IMR-90 (cell line): ENCODE measurements at regions of chr11 and their contacts with region 1.

Region 1: DNA sequence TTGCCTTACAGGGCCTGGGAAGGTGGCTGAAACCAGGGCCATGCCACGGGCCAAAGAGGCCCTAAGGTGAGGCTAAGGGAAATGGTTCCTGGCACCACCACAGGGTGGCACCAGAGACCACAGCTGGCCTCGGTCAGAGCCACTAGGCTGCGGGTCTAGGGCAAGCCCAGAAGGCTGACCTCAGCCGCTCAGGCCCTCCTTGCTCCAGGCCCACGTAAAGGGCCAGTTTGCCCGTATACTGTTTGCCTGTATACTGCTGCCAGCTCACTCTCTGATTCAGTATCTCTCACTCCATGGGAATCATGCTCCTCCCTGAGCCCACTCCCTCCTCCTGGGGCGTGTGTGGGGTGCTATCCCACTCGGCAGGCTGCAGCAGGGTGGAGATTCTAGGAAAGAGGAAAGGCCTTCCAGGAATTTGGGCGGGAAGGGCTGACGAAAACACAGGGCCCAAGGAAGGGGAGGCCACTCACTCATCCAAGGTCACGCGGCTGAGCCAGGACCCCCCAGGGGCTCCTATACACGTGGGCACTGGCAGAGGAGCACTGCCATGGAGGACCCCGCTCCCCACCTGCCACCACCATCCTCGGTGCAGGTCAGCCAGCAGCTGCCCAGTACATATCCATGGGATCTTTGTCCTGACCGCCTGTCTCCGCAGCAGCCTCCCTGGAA is 62.4 kb downstream of the NECTIN1 start:
- DNase-seq: peak; percentile 47
- ATAC-seq: peak; percentile 95
- H3K4me3 ChIP-seq: no peak overlapping the region
- H3K27ac ChIP-seq: no peak overlapping the region
- H3K4me1 ChIP-seq: peaks cover 4% of the 10 kb centered on the region; the same call in 1 of the 2 replicates
- H3K27me3 ChIP-seq: no peaks in the 10 kb centered on the region
- CTCF ChIP-seq: peak; percentile 94
- POLR2A ChIP-seq: peak; percentile 35; the same call in 1 of the 2 replicates
- RAD21 ChIP-seq: peak; percentile 98

Region 2: DNA sequence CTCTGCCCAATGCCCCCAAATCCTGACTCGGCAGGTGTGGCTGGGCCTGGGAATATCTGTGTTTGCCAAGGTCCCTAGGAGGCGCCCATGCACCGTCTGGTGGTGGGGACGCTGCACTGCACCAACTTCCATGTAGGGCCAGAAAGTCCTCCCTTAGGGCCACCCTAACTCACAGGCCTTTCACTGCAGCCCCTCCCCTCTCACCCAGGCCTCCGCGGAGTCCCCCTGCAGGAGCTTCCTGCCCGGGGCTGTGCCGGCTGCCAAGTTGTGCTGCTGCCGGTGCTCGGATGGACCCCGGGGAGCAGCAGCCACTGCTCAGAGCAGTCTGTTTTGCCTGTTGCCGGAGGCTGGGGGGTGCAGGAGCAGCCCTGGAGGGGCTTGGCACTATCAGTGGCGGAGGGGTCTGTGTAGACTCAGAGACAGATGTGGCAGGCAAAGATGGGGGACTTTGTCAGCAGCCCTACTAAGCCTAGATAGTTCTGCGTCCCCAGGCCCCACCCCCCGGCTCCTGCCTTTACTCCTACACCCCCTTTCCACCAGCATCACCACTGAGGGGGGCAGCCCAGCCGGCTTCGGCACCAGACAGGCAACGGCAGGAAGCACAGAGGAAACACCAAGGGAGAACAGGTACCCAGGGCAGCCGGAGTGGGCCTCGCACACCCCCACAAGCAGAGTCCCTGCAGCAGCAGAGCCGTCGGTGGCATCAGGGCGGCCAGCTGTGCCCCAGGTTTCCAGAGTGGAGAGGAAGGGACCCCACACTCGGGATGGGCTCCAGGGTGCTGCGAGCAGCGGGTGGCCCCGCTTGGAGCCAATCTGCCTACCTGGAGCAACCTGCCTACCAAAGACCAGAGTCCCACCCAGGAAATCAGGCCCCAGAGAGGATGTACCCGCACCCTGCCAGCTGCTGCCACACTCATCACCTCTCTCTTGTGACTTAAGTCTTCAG is 347.0 kb after region 1 on chr11:
- CTCF ChIA-PET with region 1: no interaction called
- POLR2A ChIA-PET with region 1: no interaction called
- dilution Hi-C with region 1: no loop called
- in situ Hi-C with region 1: no loop called
- intact Hi-C with region 1: loop called (anchors 1 kb)
- DNase-seq: peak; percentile 10
- ATAC-seq: peak; percentile 57
- H3K4me3 ChIP-seq: no peak overlapping the region
- H3K27ac ChIP-seq: no peak overlapping the region
- H3K4me1 ChIP-seq: no peaks in the 10 kb centered on the region
- H3K27me3 ChIP-seq: peaks cover 38% of the 10 kb centered on the region
- CTCF ChIP-seq: peak; percentile 53
- POLR2A ChIP-seq: no peak
- RAD21 ChIP-seq: peak; percentile 47

Region 3: DNA sequence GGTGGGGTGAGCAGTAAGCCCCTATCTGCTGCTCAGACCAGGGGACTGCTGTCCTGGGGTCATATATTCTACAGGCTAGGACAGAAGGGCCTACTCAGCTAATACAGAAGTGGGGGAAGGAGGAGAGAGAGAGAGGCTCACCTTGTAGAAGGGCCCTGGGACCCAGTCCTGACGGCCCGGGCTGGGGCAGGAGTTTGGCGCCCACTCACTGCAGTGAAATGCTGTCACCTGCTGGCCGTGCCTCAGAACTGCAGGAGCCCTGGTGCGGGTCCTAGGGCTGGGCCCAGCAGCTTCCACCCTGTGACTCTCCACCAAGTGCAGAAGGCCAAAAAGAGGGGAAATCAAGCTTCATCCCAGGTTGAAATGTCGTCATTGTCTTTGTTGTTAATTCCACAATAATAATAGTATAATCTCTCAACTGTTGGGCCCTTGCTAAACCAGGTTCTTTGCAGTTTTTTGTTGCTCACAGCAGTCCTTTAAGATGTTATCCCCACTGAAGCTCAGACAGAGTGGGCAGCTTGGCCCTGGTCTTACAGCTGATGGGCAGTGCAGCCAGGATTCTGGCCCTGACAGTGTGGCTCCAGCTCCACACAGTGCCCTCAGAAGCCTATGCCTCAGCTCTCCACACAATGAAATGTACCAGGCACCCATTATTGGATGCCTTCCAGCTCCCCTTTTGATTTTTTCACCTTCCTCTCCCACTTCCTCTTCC is 441.7 kb after region 1 on chr11:
- CTCF ChIA-PET with region 1: interaction called, 3 read pairs
- POLR2A ChIA-PET with region 1: no interaction called
- dilution Hi-C with region 1: no loop called
- in situ Hi-C with region 1: loop called (anchors 5 kb)
- intact Hi-C with region 1: loop called (anchors 1 kb)
- DNase-seq: peak; percentile 30
- ATAC-seq: peak; percentile 99
- H3K4me3 ChIP-seq: no peak overlapping the region
- H3K27ac ChIP-seq: no peak overlapping the region
- H3K4me1 ChIP-seq: no peaks in the 10 kb centered on the region
- H3K27me3 ChIP-seq: peaks cover 68% of the 10 kb centered on the region
- CTCF ChIP-seq: peak; percentile 98
- POLR2A ChIP-seq: no peak
- RAD21 ChIP-seq: peak; percentile 95

Region 4: GRCh38 chr11:120303004-120303637 is 636.5 kb after region 1 on chr11:
- CTCF ChIA-PET with region 1: no interaction called
- POLR2A ChIA-PET with region 1: no interaction called
- dilution Hi-C with region 1: no loop called
- in situ Hi-C with region 1: no loop called
- intact Hi-C with region 1: loop called (anchors 5 kb)
- DNase-seq: peak; percentile 80
- ATAC-seq: peak; percentile 74
- H3K4me3 ChIP-seq: no peak overlapping the region
- H3K27ac ChIP-seq: no peak overlapping the region
- H3K4me1 ChIP-seq: peaks cover 6% of the 10 kb centered on the region; the same call in 1 of the 2 replicates
- H3K27me3 ChIP-seq: peaks cover 16% of the 10 kb centered on the region
- CTCF ChIP-seq: peak; percentile 99
- POLR2A ChIP-seq: no peak
- RAD21 ChIP-seq: peak; percentile 75